ENCODE measurements at regions of chr12 and their contacts with region 1.

Region 1: GRCh38 chr12:104358347-104359003 is 54.9 kb downstream of the EID3 start:
- DNase-seq: peak; percentile 67
- ATAC-seq: peak; percentile 36
- H3K4me3 ChIP-seq: no peak overlapping the region
- H3K27ac ChIP-seq: no peak overlapping the region
- H3K4me1 ChIP-seq: peaks cover 23% of the 10 kb centered on the region
- H3K27me3 ChIP-seq: no peaks in the 10 kb centered on the region
- CTCF ChIP-seq: peak; percentile 88

Region 2: DNA sequence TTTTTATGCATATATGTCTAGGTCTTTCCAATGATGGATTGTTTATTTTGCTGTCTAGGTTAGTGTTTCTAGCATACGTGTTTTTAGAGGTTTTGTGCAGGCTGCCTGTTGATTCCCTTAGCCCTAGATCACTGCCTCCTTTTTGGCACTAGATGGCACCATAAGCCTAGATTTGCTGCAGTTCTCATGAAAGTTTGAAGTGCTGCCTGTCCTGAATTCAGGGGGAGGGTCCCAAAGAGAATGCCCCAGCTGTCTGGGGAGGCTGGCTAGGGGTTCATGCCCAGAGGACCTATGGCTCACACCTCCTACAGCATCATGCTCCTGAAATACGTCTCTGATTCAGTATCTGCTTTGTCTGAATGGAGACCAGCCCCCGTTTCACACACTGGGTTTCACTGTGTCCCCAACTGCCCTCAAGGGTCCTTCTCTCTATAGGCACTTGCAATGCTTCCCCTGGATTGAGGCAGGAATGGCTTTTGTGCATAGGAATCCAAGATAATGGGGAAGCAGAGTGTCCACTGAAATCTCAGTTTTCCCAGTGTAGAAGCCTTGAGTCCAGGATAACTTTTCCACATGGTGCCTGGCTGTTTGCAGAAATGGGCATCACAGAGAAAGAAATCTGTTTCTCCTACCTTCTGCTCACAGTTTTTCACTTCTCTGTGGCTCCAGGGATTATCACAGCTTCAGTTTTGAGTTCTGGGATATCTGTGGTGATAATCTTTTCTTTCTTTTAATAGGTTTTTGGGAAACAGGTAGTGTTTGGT is 157.1 kb before region 1 on chr12:
- CTCF ChIA-PET with region 1: no interaction called
- POLR2A ChIA-PET with region 1: no interaction called
- in situ Hi-C with region 1: no loop called
- intact Hi-C with region 1: loop called (anchors 5 kb)
- DNase-seq: peak; percentile 61
- ATAC-seq: peak; percentile 95
- H3K4me3 ChIP-seq: peak overlapping the region in 1 of 2 experiments; percentile 7; a peak in 1 of 4 replicates
- H3K27ac ChIP-seq: peak overlapping the region; percentile 80
- H3K4me1 ChIP-seq: peaks cover 6% of the 10 kb centered on the region; the same call in 1 of the 2 replicates
- H3K27me3 ChIP-seq: no peaks in the 10 kb centered on the region
- CTCF ChIP-seq: peak; percentile 86

Region 3: GRCh38 chr12:104457746-104458693 is 99.5 kb after region 1 on chr12:
- CTCF ChIA-PET with region 1: no interaction called
- POLR2A ChIA-PET with region 1: no interaction called
- in situ Hi-C with region 1: no loop called
- intact Hi-C with region 1: no loop called
- DNase-seq: no peak
- ATAC-seq: peak; percentile 33
- H3K4me3 ChIP-seq: peak overlapping the region; percentile 55 to 61
- H3K27ac ChIP-seq: peak overlapping the region; percentile 78
- H3K4me1 ChIP-seq: peaks cover 13% of the 10 kb centered on the region
- H3K27me3 ChIP-seq: peaks cover 6% of the 10 kb centered on the region; the same call in 1 of the 2 replicates
- CTCF ChIP-seq: no peak